Common myeloid progenitor, CD34-positive (primary cell): ENCODE measurements at regions of chr12 and their contacts with region 1.

Region 1: DNA sequence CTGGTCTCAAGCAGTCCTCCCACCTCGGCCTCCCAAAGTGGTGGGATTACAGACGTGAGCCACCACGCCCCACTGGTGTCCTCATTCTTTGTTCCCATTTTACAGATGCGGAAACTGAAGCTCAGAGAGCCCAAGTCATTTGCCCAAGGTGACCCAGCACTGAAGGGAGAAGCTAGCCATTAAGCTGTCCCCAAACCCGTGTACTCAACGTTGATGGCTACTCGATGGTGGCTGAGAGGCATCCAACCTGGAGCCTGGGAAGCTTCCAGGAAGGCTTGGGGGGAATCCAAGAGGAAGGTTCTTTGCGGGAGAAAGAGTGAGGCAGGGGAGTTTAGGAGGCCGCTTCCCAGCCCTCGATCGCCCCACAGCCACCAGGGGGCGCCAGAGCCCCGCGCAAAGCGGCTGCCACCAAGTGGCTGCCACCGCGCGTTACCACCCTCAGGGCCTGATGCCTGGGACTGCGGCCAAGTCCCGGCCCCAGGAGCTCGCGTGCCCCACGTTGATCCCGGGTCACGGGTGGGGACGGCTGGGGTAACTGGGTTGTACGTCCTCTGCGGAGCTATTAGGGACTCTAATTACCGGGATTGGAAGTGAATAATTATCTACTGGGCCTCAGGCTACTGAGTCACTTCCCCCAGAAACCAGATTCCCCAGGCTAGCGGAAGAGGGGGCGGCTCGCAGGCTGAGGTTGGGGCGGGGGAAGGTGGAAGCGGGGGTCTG is 8.8 kb upstream of the SH2B3 start:
- DNase-seq: peak; percentile 90 to 94 (median 93)
- H3K4me3 ChIP-seq: peak overlapping the region in 6 of 7 experiments; percentile 26 to 67 (median 48)
- H3K27ac ChIP-seq: peak overlapping the region in 1 of 2 experiments; percentile 34
- H3K4me1 ChIP-seq: peaks cover 2 to 42% (median 31%) of the 10 kb centered on the region in 4 experiments
- H3K27me3 ChIP-seq: no peaks in the 10 kb centered on the region

Region 2: GRCh38 chr12:111046896-111047295 is 350.0 kb before region 1 on chr12:
- CTCF ChIA-PET with region 1: no interaction called
- POLR2A ChIA-PET with region 1: no interaction called
- DNase-seq: no peak
- H3K4me3 ChIP-seq: no peak overlapping the region
- H3K27ac ChIP-seq: no peak overlapping the region
- H3K4me1 ChIP-seq: no peaks in the 10 kb centered on the region
- H3K27me3 ChIP-seq: peaks cover 0 to 4% (median 0%) of the 10 kb centered on the region in 5 experiments

Region 3: DNA sequence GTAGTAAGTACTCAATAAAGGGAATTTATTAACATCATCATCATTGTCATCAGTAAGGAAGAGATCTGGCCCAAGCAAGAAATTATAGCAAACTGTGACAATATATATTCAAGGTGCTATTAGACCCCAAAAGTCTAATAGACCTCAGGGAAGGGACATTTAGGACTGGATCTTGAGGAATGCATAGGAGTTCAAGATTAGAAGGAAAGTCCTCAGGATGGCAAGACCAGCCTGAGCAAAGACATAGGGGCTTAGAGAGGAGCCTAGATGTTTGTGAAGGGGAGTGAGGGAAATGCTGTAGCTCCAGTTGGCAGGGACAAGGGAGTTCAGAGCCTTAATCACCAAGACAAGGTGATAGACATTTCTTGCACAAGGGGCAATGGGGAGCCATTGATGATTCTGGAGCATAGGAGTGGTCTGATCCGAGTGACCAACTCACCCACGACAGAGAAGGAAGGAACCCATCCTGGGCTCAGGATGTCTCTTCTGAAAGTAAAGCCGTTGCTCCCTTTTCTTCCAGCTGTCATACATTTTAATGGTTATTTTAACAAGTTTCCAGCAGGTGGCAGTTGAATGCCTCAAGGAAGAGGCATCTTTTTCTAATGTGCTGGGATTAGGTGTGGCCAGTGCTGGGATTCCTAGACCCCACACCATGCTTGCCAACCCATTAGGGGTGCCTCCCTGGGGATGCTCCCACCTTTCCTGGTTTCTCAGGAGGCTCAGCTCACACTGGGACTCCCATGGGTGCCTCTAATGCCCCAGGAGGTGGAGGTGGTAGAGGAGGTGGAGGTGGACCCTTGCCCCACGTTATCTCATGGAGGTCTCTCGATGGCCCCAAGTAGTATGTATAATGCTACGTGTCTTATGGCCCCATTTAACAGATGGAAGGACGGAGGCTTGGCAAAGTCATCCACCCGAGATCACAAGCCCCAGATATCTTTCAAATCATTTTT is 65.8 kb before region 1 on chr12:
- CTCF ChIA-PET with region 1: interaction called, 18 read pairs
- POLR2A ChIA-PET with region 1: no interaction called
- DNase-seq: peak; percentile 57 to 72 (median 59)
- H3K4me3 ChIP-seq: no peak overlapping the region
- H3K27ac ChIP-seq: no peak overlapping the region
- H3K4me1 ChIP-seq: peaks cover 0 to 2% (median 0%) of the 10 kb centered on the region in 4 experiments
- H3K27me3 ChIP-seq: peaks cover 0 to 2% (median 0%) of the 10 kb centered on the region in 5 experiments

Region 4: GRCh38 chr12:111412007-111412829 is 15.3 kb after region 1 on chr12:
- CTCF ChIA-PET with region 1: interaction called, 31 read pairs
- POLR2A ChIA-PET with region 1: interaction called, 6 read pairs
- DNase-seq: peak in 2 of 3 donors; percentile 48 to 62
- H3K4me3 ChIP-seq: peak overlapping the region in 3 of 7 experiments; percentile 9 to 31 (median 20)
- H3K27ac ChIP-seq: peak overlapping the region; percentile 25 to 79
- H3K4me1 ChIP-seq: peaks cover 17 to 81% (median 71%) of the 10 kb centered on the region in 4 experiments
- H3K27me3 ChIP-seq: no peaks in the 10 kb centered on the region

Region 5: GRCh38 chr12:111451649-111452129 is 54.8 kb after region 1 on chr12:
- CTCF ChIA-PET with region 1: interaction called, 820 read pairs
- POLR2A ChIA-PET with region 1: interaction called, 12 read pairs
- DNase-seq: peak; percentile 67 to 80 (median 70)
- H3K4me3 ChIP-seq: no peak overlapping the region
- H3K27ac ChIP-seq: no peak overlapping the region
- H3K4me1 ChIP-seq: peaks cover 7 to 39% (median 28%) of the 10 kb centered on the region in 4 experiments
- H3K27me3 ChIP-seq: no peaks in the 10 kb centered on the region

Region 6: DNA sequence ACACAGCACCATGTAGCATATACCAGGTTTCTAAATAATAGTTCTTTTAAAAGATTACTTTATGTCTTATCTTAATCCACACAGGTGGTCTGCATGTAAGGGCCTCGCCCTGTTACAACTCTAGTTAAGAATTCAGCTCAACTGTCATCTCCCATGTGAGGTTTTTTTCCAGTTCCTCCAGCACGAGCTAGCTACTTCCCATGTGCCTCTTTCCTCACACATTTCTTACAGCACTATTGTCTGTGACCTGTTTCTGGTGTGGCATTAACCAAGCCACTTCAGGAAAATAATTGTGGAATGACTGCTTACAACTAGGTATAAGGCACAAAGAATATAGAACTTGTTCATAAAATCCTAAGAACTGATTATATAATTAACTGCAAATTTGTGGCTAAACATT is 74.3 kb after region 1 on chr12:
- CTCF ChIA-PET with region 1: interaction called, 21 read pairs
- POLR2A ChIA-PET with region 1: interaction called, 5 read pairs
- DNase-seq: no peak
- H3K4me3 ChIP-seq: no peak overlapping the region
- H3K27ac ChIP-seq: peak overlapping the region in 1 of 2 experiments; percentile 55
- H3K4me1 ChIP-seq: peaks cover 0 to 3% (median 0%) of the 10 kb centered on the region in 4 experiments
- H3K27me3 ChIP-seq: no peaks in the 10 kb centered on the region

Region 7: GRCh38 chr12:111529424-111530368 is 132.8 kb after region 1 on chr12:
- CTCF ChIA-PET with region 1: interaction called, 12 read pairs
- POLR2A ChIA-PET with region 1: no interaction called
- DNase-seq: peak; percentile 70 to 86 (median 83)
- H3K4me3 ChIP-seq: no peak overlapping the region
- H3K27ac ChIP-seq: no peak overlapping the region
- H3K4me1 ChIP-seq: peaks cover 0 to 3% (median under 1%) of the 10 kb centered on the region in 4 experiments
- H3K27me3 ChIP-seq: no peaks in the 10 kb centered on the region